Mucosa of descending colon (tissue), 3 donors: ENCODE measurements at regions of chr11 and their contacts with region 1.

Region 1: GRCh38 chr11:17384002-17384511 is 4.4 kb downstream of the KCNJ11 start:
- DNase-seq: peak; percentile 67 to 83 (median 81)
- ATAC-seq: peak; percentile 69
- H3K4me3 ChIP-seq: no peak overlapping the region
- H3K4me1 ChIP-seq: peaks cover 3% of the 10 kb centered on the region
- CTCF ChIP-seq: peak; percentile 80

Region 2: DNA sequence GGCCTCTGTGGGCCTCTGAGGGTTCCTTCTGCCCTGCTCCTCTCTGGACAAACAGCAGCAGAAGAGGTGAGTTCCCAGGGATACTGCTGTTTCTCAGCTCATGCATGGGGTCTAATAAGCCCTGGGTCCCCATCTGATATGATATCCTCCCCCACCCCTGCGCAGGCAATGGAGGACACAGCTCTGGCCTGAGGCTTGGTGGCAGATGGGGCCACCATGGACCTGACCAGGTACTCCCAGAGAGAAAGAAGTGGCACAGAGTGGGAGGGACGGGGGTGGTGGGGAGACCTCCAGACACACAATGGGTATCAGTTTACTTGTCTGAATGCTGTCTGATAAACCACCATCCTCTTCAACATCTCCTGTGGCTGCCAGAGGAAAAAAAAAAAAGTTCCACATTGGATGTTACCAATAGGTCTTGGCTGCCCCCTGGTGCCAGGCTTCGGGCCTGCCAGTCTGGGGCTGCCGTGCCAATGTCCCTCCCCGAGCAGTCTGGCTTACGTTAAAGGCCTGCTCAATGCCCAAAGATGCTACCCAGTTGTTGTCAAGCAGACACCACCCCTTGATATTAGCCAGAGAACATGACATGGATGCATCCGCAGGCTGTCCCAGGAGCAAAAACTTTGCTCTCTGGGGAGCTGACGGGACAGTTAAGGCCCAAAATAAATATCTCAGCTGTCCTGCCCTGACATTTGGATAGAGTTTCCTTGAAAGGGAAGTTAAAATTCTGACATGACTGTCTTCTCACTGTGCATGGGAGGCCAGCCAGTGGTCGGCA is 120.5 kb after region 1 on chr11:
- intact Hi-C with region 1: loop called (anchors 1 to 2 kb)
- DNase-seq: peak; percentile 73 to 92 (median 84)
- ATAC-seq: peak; percentile 80
- H3K4me3 ChIP-seq: no peak overlapping the region
- H3K4me1 ChIP-seq: no peaks in the 10 kb centered on the region
- CTCF ChIP-seq: peak; percentile 68

Region 3: GRCh38 chr11:18036456-18036855 is 652.4 kb after region 1 on chr11:
- intact Hi-C with region 1: no loop called
- DNase-seq: no peak
- ATAC-seq: no peak
- H3K4me3 ChIP-seq: no peak overlapping the region
- H3K4me1 ChIP-seq: no peaks in the 10 kb centered on the region
- CTCF ChIP-seq: no peak